ENCODE measurements at regions of chr9 and their contacts with region 1.

Region 1: DNA sequence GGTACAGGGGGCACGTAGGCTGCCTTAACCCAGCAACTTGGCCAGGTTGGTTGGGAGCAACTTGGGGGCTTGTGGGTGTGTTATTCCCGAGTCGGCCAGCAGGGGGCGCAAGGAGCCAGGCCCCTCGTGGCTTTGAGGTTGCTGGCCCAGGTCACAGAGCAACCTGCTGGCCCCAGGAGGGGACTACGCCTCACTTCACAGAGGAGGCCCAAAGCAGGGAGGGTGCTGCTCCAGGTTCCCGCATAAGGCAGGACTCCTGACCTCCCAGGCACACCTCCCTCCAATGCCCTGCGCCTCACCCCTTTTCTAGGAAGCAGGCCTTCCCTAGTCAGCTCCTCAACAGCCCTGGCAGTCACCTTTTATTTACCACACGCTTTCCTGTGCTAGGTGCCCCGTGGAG is 18.1 kb downstream of the KYAT1 start:
- DNase-seq: peak; percentile 77
- H3K4me3 Mint-ChIP-seq: no peak overlapping the region
- H3K27ac Mint-ChIP-seq: no peak overlapping the region
- H3K4me1 Mint-ChIP-seq: no peaks in the 10 kb centered on the region
- H3K27me3 Mint-ChIP-seq: no peaks in the 10 kb centered on the region
- CTCF ChIP-seq: peak; percentile 95

Region 2: DNA sequence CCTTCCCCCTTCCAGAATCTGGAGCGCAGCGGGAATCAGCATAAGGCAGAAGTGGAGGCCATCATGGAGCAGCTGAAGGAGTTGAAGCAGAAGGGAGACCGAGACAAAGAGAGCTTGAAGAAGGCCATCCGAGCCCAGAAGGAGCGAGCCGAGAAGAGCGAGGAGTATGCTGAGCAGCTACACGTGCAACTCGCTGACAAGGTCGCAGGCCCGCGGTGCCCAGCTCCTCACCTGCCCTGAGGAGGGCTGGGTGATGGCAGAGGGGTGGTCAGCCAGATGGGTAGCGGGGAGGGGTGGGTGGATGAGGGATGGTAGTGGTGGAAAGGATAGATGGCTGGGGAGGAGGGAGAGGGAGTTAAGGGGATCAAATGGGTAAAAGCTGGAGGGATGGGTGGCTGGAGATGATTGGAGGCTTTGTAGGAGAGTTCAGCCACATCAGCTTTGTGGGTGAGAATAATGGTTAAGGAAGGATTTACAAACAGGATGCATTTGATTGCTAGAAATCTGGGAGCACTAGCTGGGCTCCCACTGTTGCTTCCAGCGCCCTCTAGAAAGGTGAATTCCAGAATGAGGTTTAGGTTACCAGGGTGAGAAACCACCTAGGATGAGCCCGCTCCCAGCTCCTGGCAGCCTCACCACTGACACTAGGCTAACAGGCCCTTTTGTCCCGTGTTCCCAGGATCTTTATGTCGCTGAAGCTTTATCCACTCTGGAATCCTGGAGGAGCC is 378.8 kb before region 1 on chr9:
- CTCF ChIA-PET with region 1: no interaction called
- intact Hi-C with region 1: no loop called
- DNase-seq: no peak
- H3K4me3 Mint-ChIP-seq: no peak overlapping the region
- H3K27ac Mint-ChIP-seq: no peak overlapping the region
- H3K4me1 Mint-ChIP-seq: no peaks in the 10 kb centered on the region
- H3K27me3 Mint-ChIP-seq: no peaks in the 10 kb centered on the region
- CTCF ChIP-seq: no peak

Region 3: DNA sequence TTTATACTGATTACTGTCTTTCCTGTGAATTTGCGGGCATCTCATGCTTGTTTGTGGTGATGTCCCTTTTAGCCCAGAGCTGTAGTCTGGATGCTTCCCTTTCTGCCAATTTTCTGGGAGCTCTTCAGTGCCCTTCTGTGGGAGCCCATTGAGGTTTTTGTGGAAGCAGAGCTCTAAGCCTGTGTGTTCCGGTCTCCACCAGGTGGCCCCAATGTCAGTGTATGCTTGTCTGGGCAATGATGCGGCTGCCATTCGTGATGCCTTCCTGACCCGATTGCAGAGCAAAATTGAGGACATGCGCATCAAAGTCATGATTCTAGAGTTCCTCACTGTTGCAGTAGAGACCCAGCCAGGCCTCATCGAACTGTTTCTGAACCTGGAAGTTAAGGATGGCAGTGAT is 129.3 kb after region 1 on chr9:
- CTCF ChIA-PET with region 1: interaction called, 10 read pairs
- intact Hi-C with region 1: no loop called
- DNase-seq: no peak
- H3K4me3 Mint-ChIP-seq: no peak overlapping the region
- H3K27ac Mint-ChIP-seq: no peak overlapping the region
- H3K4me1 Mint-ChIP-seq: no peaks in the 10 kb centered on the region
- H3K27me3 Mint-ChIP-seq: no peaks in the 10 kb centered on the region
- CTCF ChIP-seq: no peak